Natural killer cell (primary cell): ENCODE measurements at regions of chr5 and their contacts with region 1.

Region 1: DNA sequence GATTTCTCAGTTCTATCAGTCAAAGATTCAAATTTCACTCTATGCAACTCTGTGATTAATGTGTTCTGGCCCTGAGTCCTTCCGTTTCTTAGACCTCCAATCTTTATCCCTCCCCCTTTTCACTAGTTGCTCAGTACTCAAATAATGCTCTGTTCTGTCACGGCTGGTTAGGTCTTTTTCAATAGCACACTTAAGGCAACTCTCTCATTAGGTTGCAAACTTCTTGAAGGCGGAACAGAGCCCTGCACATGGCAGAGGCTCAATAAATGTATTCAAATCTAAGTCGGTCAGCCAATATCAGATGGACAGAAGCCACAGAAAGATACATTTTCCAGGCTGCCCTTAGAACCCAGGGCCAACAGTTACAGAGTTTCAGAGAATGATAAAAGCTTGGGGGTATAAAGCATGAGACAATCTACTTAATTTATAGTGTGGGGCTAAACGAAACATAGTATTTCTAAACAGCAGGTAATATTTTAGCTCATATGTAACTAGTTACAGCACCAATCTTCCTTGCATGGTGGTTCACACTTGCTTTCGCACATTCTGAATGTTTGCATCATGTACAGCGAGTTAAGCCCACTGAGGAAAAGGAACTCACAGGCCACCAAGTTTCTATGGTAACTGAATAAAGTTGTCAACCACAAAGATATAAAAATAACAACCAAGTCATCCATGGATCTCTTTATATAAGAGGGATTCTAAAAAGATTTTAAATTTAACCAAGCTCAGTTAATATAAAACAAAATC is 67.1 kb upstream of the GOLPH3 start:
- DNase-seq: peak; percentile 41 to 69
- ATAC-seq: peak; percentile 89 to 93 (median 92)
- H3K4me3 ChIP-seq: no peak overlapping the region
- H3K4me3 Mint-ChIP-seq: peak overlapping the region; percentile 90
- H3K27ac ChIP-seq: peak overlapping the region; percentile 92
- H3K27ac Mint-ChIP-seq: peak overlapping the region; percentile 97 to 98
- H3K4me1 ChIP-seq: peaks cover 40% of the 10 kb centered on the region
- H3K4me1 Mint-ChIP-seq: peaks cover 54 to 55% of the 10 kb centered on the region in 2 donors
- H3K27me3 ChIP-seq: no peaks in the 10 kb centered on the region
- H3K27me3 Mint-ChIP-seq: no peaks in the 10 kb centered on the region
- CTCF ChIP-seq: no peak

Region 2: DNA sequence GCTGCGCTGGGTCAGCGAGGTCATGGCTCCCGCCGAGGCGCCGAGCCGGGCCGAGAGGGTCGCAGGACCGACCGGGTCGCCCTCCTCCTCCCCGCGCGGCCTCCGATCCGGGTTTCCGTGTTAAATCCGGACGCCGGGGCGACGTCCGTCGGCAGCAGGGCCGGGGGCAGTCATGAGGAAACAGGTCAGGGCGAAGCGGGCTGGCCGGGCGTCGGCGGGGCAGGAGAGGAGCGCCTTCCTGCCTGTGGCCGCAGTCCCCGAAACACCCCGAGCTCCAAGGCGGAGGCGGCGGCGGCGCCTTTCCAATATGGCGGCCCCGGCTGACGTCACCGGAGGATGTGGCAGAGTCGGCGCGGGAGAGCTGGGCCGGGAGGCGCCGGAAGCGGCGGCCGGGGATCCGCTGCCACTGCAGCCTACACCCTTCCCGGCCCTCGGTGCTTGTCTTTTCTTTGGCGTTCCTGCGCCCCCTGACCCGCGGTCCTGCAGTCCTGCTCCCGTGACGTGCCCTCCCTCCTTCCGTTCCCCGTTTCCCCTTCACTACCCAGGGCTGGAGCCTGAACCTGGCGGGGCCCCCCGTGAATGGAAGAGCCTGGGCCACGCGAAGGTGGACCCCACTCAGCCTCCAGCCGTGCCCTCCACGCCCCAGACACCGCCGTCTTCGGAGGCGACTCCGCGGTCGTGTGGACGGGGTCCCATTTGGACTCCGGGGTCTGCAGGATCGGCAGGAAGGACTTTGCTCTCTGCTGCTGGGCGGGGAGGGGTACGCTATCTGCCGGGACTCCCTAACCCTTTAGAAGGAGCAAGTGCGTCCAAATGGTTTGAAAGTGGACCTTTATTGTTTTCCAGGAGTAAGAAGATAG is 67.0 kb before region 1 on chr5 and contains the start of gene GOLPH3:
- intact Hi-C with region 1: loop called (anchors 2 kb)
- DNase-seq: peak; percentile 92
- ATAC-seq: peak; percentile 85 to 94 (median 87)
- H3K4me3 ChIP-seq: peak within 1 kb of the TSS; percentile 82
- H3K4me3 Mint-ChIP-seq: peak within 1 kb of the TSS; percentile 98
- H3K27ac ChIP-seq: peak within 1 kb of the TSS; percentile 93
- H3K27ac Mint-ChIP-seq: peak within 1 kb of the TSS; percentile 98
- H3K4me1 ChIP-seq: peaks cover 18% of the 10 kb centered on the region
- H3K4me1 Mint-ChIP-seq: peaks cover 32 to 34% of the 10 kb centered on the region in 2 donors
- H3K27me3 ChIP-seq: no peaks in the 10 kb centered on the region
- H3K27me3 Mint-ChIP-seq: peaks cover 0 to 9% of the 10 kb centered on the region in 2 donors
- CTCF ChIP-seq: no peak
- total RNA-seq, gene GOLPH3: 67.6 to 70.6 (median 69.3) TPM

Region 3: DNA sequence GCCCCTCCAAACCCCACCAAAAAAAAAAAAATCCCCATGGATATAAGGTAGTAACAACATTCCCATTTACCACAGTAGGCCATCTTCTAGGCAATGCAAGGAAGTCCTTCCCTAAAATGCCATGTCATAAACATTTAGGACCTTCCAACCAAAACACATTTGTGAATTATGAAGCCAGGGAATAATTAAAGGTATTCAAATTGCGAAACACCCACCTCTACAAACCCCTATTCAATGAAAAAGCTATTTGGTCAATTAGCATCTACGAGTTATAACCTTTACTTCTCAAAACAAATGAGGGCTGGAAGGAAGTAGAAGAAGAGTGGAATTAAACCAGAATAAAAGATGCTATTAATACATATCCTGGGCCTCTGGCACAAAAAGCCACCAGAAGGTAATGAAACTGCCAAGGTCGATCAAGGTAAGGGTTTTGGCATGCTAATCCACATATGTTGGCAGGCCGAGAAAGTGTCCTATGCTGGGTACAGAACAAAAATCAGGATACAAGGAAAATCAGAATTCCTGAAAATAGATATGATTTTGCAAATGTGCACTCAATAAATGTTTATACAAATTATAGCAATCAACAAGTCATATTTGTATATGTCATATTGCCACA is 23.9 kb after region 1 on chr5:
- intact Hi-C with region 1: no loop called
- DNase-seq: no peak
- ATAC-seq: no peak
- H3K4me3 ChIP-seq: no peak overlapping the region
- H3K4me3 Mint-ChIP-seq: no peak overlapping the region
- H3K27ac ChIP-seq: no peak overlapping the region
- H3K27ac Mint-ChIP-seq: peak overlapping the region; percentile 13 to 29
- H3K4me1 ChIP-seq: peaks cover 18% of the 10 kb centered on the region
- H3K4me1 Mint-ChIP-seq: peaks cover 9 to 12% of the 10 kb centered on the region in 2 donors
- H3K27me3 ChIP-seq: no peaks in the 10 kb centered on the region
- H3K27me3 Mint-ChIP-seq: no peaks in the 10 kb centered on the region
- CTCF ChIP-seq: no peak

Region 4: DNA sequence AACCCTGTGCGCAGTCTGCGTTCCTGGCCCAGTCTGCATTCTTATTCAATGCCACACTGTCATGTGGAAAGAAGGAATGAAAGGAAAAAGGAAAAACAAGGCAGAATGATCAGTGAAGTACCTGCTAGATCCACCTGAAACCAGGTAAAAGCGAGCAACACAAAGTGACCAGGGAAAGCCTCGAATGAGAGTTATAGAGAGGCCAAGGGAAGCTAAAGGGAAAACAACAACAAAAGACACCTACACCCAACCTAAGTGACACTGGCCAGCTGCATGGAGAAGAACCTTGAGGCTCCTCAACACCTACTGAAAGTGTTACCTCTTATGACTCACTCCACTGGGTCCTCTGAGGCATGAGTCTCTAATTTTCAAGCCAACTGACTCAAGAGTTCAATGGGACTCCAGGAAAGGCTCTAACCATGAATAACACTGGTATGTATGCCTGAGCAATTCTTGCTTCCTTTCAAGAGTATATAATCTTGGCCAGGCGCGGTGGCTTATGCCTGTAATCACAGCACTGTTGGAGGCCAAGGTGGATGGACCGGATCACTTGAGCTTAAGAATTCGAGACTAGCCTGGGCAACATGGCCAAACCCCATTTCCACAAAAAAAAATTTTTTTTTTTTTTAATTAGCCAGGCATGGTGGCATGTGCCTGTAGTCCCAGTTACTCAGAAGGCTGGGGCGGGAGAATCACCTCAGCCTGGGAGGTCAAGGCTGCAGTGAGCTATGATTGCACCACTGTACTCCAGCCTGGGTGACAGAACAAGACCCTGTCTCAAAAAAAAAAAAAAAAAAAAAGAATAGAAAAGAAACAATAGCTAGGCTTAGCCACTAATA is 42.5 kb after region 1 on chr5:
- intact Hi-C with region 1: loop called (anchors 1 kb)
- DNase-seq: peak in 1 of 2 donors; percentile 41
- ATAC-seq: peak; percentile 84 to 91 (median 87)
- H3K4me3 ChIP-seq: no peak overlapping the region
- H3K4me3 Mint-ChIP-seq: peak overlapping the region; percentile 25
- H3K27ac ChIP-seq: peak overlapping the region; percentile 9
- H3K27ac Mint-ChIP-seq: peak overlapping the region; percentile 81 to 94
- H3K4me1 ChIP-seq: peaks cover 26% of the 10 kb centered on the region
- H3K4me1 Mint-ChIP-seq: peaks cover 54 to 63% of the 10 kb centered on the region in 2 donors
- H3K27me3 ChIP-seq: no peaks in the 10 kb centered on the region
- H3K27me3 Mint-ChIP-seq: no peaks in the 10 kb centered on the region
- CTCF ChIP-seq: no peak

Region 5: DNA sequence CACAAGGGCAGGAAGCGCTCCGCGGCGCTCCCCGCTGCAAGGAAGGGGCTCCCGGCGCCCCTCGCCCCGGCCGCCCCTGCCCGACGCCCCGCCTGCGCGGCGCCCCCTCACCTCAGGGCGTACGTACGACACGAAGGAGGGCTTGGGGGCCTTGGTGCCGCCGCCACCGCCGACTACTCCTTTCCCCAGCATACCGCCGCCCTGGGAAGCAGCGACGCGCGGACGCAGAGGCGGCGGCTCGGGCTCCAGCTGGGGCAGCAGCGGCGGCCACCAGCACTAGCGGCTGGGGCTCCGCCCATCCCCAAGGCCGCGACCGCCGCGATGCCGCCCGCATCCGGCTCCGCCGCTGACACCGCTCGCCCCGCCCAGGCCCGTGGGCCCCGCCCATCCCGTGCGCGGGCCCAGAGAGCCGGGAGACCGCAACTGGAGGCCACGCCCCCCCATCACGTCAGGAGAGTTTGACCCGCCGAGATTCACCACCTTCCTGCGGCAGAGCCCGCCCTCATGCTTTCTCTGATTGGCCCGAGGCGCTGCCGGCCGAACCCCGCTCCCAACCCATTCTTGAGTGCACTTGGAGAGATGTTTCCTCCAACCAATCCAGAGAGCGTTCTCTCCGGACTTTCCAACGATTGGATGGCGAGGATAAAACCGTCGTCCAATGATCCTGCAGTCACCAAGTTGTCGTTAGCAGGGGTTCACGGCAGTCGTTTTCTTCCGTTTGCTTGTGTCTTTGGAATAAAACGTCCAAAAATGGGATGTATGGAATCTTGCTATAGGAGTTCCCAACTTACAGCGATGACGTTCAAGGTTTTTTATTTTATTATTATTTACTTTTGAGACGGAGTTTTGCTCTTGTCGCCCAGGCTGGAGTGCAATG is 71.7 kb after region 1 on chr5 and contains the start of gene MTMR12:
- intact Hi-C with region 1: loop called (anchors 1 kb)
- DNase-seq: peak; percentile 100
- ATAC-seq: peak; percentile 87 to 97 (median 89)
- H3K4me3 ChIP-seq: peak within 1 kb of the TSS; percentile 73
- H3K4me3 Mint-ChIP-seq: peak within 1 kb of the TSS; percentile 95
- H3K27ac ChIP-seq: peak within 1 kb of the TSS; percentile 85
- H3K27ac Mint-ChIP-seq: peak within 1 kb of the TSS; percentile 95
- H3K4me1 ChIP-seq: peaks cover 33% of the 10 kb centered on the region
- H3K4me1 Mint-ChIP-seq: peaks cover 42% of the 10 kb centered on the region in 2 donors
- H3K27me3 ChIP-seq: no peaks in the 10 kb centered on the region
- H3K27me3 Mint-ChIP-seq: no peaks in the 10 kb centered on the region
- CTCF ChIP-seq: no peak
- total RNA-seq, gene MTMR12: 36.9 to 47.7 (median 39.8) TPM

Region 6: DNA sequence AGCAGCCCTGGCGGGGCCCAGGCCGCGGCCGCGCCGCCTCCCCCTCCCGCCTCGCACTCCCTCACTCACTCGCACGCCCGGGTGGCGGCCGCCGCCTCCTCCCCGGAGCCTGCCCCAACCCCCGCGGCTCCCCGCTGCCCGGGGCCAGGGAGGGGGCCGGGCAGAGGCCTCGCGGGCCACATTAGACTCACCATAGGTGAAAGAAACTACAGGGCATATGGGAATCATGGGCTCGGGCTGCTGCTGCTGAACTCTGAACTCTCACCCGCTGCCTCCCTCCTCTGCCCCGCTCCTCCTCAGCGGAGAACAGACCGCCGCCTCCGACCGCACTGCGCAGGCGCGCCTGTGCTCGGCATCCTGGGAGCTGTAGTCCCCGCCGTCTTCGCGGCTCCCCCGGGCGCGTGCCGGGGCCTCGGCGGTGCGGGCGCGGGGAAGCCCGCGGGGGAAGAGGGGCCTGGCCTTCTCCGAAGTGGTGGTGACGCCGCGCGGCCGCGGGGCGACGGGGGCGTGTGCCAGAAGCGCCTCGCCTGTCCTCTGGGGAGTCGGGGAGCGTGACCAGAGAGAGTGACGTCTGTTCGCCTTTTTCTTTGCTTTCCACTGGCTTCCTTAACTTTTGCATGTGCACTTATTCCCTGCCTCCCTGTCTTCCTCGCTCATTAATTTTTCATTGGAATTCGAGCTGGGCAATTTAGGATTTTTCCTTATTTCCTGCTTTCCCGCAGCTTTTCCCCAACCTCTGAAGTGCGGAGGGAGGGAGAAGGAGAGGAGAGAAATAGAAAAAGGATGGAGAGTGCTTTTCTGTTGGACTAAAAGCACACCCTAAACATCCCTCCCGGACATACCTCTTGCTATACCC is 203.4 kb after region 1 on chr5 and contains the start of gene ZFR:
- intact Hi-C with region 1: loop called (anchors 5 kb)
- DNase-seq: peak; percentile 86 to 97
- ATAC-seq: peak; percentile 87 to 95 (median 90)
- H3K4me3 ChIP-seq: peak within 1 kb of the TSS; percentile 98
- H3K4me3 Mint-ChIP-seq: peak within 1 kb of the TSS; percentile 91
- H3K27ac ChIP-seq: peak within 1 kb of the TSS; percentile 96
- H3K27ac Mint-ChIP-seq: peak within 1 kb of the TSS; percentile 90 to 91
- H3K4me1 ChIP-seq: peaks cover 17% of the 10 kb centered on the region
- H3K4me1 Mint-ChIP-seq: peaks cover 27 to 28% of the 10 kb centered on the region in 2 donors
- H3K27me3 ChIP-seq: no peaks in the 10 kb centered on the region
- H3K27me3 Mint-ChIP-seq: peaks cover 0 to 3% of the 10 kb centered on the region in 2 donors
- CTCF ChIP-seq: no peak
- total RNA-seq, gene ZFR: 62.7 to 70.8 (median 62.7) TPM